ENCODE measurements at regions of chr10 and their contacts with region 1.

Region 1: DNA sequence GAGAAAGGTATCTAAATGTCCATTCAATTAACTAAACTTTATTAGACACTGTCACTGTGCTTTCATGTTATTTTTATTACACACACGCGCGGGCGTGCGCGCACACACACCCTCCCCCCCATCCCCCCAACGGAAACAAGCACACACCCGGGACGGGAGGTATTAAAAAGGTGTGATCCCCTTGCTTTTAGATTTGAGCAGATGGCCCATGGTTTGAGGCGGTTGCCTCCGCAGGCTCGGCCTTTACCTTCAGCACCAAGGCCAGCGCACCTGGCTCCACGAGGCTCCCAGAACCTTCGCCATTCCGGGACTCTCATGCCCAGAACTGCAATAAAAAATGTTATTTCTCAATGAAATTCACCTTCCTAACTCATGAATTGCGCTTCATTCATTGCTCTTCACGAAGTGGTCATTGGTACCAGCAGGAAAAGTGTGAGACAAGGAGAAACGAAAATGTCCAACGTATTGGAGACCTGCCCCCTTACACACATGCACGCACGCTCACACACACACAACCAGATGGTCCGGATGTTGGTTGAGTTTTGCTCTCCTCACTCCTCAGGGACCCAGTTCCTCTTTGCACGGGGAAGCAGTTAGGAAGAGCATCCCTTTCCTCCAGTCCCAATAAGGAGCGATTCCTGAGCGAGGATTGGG is 20.8 kb upstream of the PTF1A start:
- DNase-seq: peak; percentile 23
- H3K4me3 Mint-ChIP-seq: no peak overlapping the region
- H3K27ac Mint-ChIP-seq: no peak overlapping the region
- H3K4me1 Mint-ChIP-seq: peaks cover 9% of the 10 kb centered on the region
- H3K27me3 Mint-ChIP-seq: peaks cover 59% of the 10 kb centered on the region

Region 2: GRCh38 chr10:23191764-23192736 is 20.7 kb after region 1 on chr10 and contains the start of gene PTF1A:
- CTCF ChIA-PET with region 1: interaction called, 3 read pairs
- intact Hi-C with region 1: loop called (anchors 1 kb)
- DNase-seq: no peak
- H3K4me3 Mint-ChIP-seq: no peak within 1 kb of the TSS
- H3K27ac Mint-ChIP-seq: no peak within 1 kb of the TSS
- H3K4me1 Mint-ChIP-seq: peaks cover 9% of the 10 kb centered on the region
- H3K27me3 Mint-ChIP-seq: peaks cover 70% of the 10 kb centered on the region
- total RNA-seq, gene PTF1A: not detected

Region 3: GRCh38 chr10:23199768-23200511 is 28.6 kb after region 1 on chr10:
- CTCF ChIA-PET with region 1: interaction called, 3 read pairs
- intact Hi-C with region 1: loop called (anchors 5 kb)
- DNase-seq: no peak
- H3K4me3 Mint-ChIP-seq: no peak overlapping the region
- H3K27ac Mint-ChIP-seq: no peak overlapping the region
- H3K4me1 Mint-ChIP-seq: peaks cover 12% of the 10 kb centered on the region
- H3K27me3 Mint-ChIP-seq: peaks cover 80% of the 10 kb centered on the region

Measured in activated naive CD4-positive, alpha-beta T cell treated with anti-CD3 and anti-CD28 coated beads for 36 hours (primary cell).